Activated CD4-positive, alpha-beta memory T cell treated with anti-CD3 and anti-CD28 coated beads for 36 hours (primary cell): ENCODE measurements at regions of chr7 and their contacts with region 1.

Region 1: GRCh38 chr7:5183145-5183544 is 6.9 kb upstream of the WIPI2 start:
- DNase-seq: no peak
- H3K4me3 Mint-ChIP-seq: no peak overlapping the region
- H3K27ac Mint-ChIP-seq: no peak overlapping the region
- H3K4me1 Mint-ChIP-seq: no peaks in the 10 kb centered on the region
- H3K27me3 Mint-ChIP-seq: peaks cover 5% of the 10 kb centered on the region

Region 2: DNA sequence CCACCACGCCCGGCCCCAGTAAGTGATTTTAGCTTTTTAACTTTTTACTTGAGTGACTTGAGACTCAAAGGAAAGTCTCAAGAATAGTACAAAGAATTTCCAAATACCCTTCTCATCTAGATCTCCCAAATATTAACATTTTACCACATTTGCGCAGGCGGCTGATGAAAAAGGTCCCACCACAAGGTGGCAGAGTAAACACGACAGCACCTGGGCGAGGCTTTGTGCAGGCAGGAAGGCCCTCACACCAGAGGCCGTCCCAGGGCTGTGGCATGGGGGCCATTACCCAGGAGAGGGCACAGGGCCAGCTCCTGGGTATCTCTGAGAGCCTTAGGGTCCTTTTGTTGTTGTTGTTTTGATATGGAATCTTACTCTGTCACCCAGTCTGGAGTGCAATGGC is 43.1 kb before region 1 on chr7:
- CTCF ChIA-PET with region 1: interaction called, 4 read pairs
- POLR2A ChIA-PET with region 1: no interaction called
- intact Hi-C with region 1: loop called (anchors 5 kb)
- DNase-seq: peak; percentile 37
- H3K4me3 Mint-ChIP-seq: no peak overlapping the region
- H3K27ac Mint-ChIP-seq: no peak overlapping the region
- H3K4me1 Mint-ChIP-seq: peaks cover 9% of the 10 kb centered on the region
- H3K27me3 Mint-ChIP-seq: no peaks in the 10 kb centered on the region

Region 3: DNA sequence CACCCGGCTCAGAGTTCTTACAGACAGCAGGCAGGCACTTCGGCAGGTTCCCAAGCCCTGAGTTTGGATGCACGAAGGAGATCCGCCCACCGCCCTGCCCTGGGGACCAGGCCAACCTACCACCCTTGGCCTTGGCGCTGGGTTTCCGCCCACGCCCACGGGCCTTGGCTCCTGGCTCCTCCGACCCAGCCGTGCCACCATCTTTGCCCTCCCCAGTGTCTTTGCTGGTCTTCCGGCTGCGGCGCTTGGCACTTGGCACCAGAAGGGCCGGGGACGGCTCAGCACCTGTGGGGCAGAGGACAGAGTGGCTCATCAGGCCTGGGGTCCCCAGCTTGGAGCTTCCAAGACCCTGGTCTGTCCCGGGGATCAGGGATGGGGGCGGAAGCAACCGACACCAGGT is 131.7 kb after region 1 on chr7:
- CTCF ChIA-PET with region 1: no interaction called
- POLR2A ChIA-PET with region 1: no interaction called
- intact Hi-C with region 1: no loop called
- DNase-seq: no peak
- H3K4me3 Mint-ChIP-seq: no peak overlapping the region
- H3K27ac Mint-ChIP-seq: no peak overlapping the region
- H3K4me1 Mint-ChIP-seq: no peaks in the 10 kb centered on the region
- H3K27me3 Mint-ChIP-seq: no peaks in the 10 kb centered on the region